Prostate gland (tissue), 2 donors: ENCODE measurements at regions of chr2 and their contacts with region 1.

Region 1: GRCh38 chr2:143259368-143259958 is 130.2 kb downstream of the ARHGAP15 start:
- DNase-seq: peak; percentile 68
- H3K4me3 ChIP-seq: no peak overlapping the region
- H3K27ac ChIP-seq: no peak overlapping the region
- H3K4me1 ChIP-seq: no peaks in the 10 kb centered on the region
- H3K27me3 ChIP-seq: no peaks in the 10 kb centered on the region
- CTCF ChIP-seq: peak; percentile 19 to 69 (median 60)
- POLR2A ChIP-seq: no peak

Region 2: DNA sequence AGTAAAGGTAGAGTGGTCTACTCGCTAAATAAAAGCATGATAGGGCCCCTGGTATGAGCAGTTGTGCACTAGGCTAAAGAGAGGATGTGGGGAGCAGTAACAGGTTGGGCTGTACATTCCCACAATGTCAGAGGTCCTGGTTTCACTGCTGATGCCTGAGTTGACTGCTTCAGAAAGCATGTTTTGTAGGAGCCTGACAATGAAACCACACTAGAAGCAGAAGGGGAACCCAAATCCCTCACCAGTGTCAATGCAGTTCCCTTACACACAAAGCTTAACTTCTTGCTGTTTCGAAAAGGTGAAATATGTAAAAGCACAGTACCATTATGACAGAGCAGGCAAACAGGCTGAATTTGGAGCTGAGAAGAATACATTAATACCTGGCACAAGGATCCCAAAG is 673.7 kb before region 1 on chr2:
- intact Hi-C with region 1: no loop called
- DNase-seq: no peak
- H3K4me3 ChIP-seq: no peak overlapping the region
- H3K27ac ChIP-seq: no peak overlapping the region
- H3K4me1 ChIP-seq: no peaks in the 10 kb centered on the region
- H3K27me3 ChIP-seq: no peaks in the 10 kb centered on the region
- CTCF ChIP-seq: no peak
- POLR2A ChIP-seq: no peak

Region 3: DNA sequence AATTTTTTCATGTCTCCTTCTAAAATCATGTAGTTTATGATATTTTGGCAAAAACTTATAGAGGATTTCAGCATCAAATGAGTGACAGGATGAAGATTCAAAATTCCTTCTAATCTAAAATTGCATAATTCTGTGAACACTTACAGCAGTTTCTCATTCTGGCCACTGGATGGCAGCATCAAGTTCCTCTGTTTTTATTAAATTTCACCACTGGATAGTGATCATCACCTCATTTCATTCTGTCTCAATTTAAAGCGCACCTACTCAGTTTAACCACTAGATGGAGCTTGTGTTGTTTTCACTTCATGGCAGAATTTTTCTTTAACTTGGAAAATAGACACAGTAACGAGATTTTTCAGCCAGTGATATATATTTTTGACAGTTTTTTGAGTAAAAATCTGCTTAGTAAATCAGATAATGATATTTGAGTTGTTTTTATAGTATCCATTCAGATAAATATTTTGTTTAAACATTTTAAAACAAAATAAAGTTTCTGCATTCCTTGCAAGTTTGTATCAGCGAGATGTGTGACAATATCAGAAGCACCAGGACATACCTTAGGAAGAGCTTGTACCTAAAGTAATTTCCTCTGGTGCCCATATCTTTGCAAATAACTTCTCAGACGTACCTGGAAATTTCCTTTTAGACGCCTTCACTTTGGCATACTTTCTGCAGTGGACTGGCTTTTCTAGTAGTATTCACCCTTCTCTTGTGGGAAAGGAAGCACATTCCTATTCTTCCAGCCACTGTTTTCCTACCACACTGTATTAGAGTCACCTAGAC is 225.0 kb before region 1 on chr2:
- intact Hi-C with region 1: loop called (anchors 10 kb)
- DNase-seq: peak; percentile 58
- H3K4me3 ChIP-seq: no peak overlapping the region
- H3K27ac ChIP-seq: no peak overlapping the region
- H3K4me1 ChIP-seq: no peaks in the 10 kb centered on the region
- H3K27me3 ChIP-seq: no peaks in the 10 kb centered on the region
- CTCF ChIP-seq: peak; percentile 72 to 98 (median 94)
- POLR2A ChIP-seq: no peak

Region 4: DNA sequence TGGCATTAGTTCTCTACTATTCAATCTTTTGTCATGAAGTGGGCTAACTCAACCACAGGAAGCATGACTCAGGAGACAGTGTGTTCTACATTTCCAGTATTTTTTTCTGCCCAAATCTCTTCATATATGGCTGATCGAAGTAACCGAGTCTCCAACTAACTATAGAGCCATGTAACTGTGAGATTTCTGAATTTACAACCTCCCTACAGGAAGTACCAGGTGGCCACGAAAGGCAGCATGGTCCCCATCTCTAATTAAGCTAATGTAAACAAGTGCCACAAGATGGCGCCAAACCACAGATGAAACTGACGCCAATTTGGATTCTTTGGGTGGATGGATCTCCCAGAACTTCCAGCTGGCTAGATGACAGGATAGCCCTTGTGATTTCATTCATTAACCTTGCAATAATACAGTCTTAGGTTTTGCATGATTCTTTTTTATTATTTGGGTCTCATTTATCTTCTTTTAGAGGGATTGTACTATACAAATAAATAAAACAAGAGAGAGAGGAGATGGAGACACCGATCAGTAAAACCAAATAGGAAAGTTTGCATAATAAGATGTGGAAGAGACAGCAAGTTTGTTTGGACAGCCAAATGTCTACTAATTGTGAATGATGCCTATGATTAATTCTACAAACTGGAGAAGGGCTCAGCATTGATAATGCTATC is 148.6 kb before region 1 on chr2:
- intact Hi-C with region 1: loop called (anchors 10 kb)
- DNase-seq: peak; percentile 44
- H3K4me3 ChIP-seq: no peak overlapping the region
- H3K27ac ChIP-seq: no peak overlapping the region
- H3K4me1 ChIP-seq: no peaks in the 10 kb centered on the region
- H3K27me3 ChIP-seq: no peaks in the 10 kb centered on the region
- CTCF ChIP-seq: peak in 3 of 4 experiments; percentile 47 to 65 (median 59)
- POLR2A ChIP-seq: no peak

Region 5: GRCh38 chr2:143162123-143162837 is 97.2 kb before region 1 on chr2:
- intact Hi-C with region 1: loop called (anchors 5 kb)
- DNase-seq: peak; percentile 29
- H3K4me3 ChIP-seq: no peak overlapping the region
- H3K27ac ChIP-seq: no peak overlapping the region
- H3K4me1 ChIP-seq: no peaks in the 10 kb centered on the region
- H3K27me3 ChIP-seq: no peaks in the 10 kb centered on the region
- CTCF ChIP-seq: peak in 3 of 4 experiments; percentile 16 to 50 (median 43)
- POLR2A ChIP-seq: no peak